PC-9 (cell line): ENCODE measurements at regions of chr7 and their contacts with region 1.

Region 1: GRCh38 chr7:118449797-118450582 is 225.5 kb downstream of the ANKRD7 start:
- DNase-seq: no peak
- H3K4me3 ChIP-seq: no peak overlapping the region
- H3K27ac ChIP-seq: no peak overlapping the region
- H3K4me1 ChIP-seq: no peaks in the 10 kb centered on the region
- H3K27me3 ChIP-seq: no peaks in the 10 kb centered on the region
- CTCF ChIP-seq: no peak

Region 2: DNA sequence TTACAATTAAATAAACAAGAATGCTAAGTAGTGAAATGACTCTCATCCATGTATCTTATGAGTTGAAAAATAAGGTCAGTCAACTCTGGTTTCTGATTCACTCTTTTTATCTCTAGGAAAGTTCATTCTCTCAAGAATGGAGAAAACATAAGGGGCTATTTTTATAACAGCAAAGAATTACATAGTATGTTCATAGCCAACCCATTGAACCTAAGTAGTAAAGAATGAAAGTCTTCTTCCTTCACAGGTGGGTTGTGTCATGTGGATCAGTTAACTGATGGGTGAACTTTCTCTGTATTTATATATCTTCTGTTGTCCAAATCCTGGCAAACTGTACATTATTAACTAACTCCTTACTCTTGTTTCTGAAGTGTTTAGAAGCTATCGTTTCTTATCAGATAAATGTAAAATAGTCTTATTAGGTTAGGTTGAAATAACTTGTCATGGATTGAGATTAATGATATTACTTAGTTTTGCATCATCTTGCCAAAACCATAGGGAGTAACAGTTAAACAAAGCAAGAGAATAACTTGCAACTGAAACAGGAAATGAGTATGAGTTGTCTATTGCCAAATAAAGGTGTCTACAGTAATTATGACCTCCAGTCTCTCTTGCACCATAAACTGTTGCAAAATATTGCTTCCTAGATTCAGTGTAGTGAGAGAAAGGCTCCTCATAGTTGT is 138.7 kb before region 1 on chr7:
- CTCF ChIA-PET with region 1: no interaction called
- POLR2A ChIA-PET with region 1: no interaction called
- intact Hi-C with region 1: no loop called
- DNase-seq: no peak
- H3K4me3 ChIP-seq: no peak overlapping the region
- H3K27ac ChIP-seq: no peak overlapping the region
- H3K4me1 ChIP-seq: no peaks in the 10 kb centered on the region
- H3K27me3 ChIP-seq: no peaks in the 10 kb centered on the region
- CTCF ChIP-seq: no peak

Region 3: DNA sequence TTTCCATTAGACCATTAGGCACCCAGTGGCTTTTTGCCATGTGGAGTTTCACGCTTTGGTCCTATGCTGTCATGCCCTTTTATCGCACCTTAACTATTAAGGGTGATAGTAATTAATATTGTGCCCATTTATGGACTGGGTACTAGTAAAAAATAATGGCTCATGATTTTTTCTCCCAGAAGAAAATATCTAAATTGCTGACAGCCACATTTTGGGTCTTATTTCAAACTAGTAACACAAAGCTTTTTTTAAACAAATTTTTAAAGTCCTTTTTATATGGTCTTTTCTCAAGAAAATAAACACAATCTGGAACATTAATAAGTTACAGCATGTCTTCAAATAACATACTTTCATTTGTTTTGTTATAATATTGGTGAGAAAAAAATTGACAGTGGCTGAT is 45.8 kb before region 1 on chr7:
- CTCF ChIA-PET with region 1: no interaction called
- POLR2A ChIA-PET with region 1: no interaction called
- intact Hi-C with region 1: loop called (anchors 5 kb)
- DNase-seq: no peak
- H3K4me3 ChIP-seq: no peak overlapping the region
- H3K27ac ChIP-seq: no peak overlapping the region
- H3K4me1 ChIP-seq: no peaks in the 10 kb centered on the region
- H3K27me3 ChIP-seq: no peaks in the 10 kb centered on the region
- CTCF ChIP-seq: no peak